ENCODE measurements at regions of chr2 and their contacts with region 1.

Region 1: GRCh38 chr2:207166039-207166348 is 246 bp upstream of the KLF7 start:
- DNase-seq: peak; percentile 95
- ATAC-seq: peak; percentile 95
- H3K4me3 Mint-ChIP-seq: peak overlapping the region; percentile 87
- H3K27ac Mint-ChIP-seq: peak overlapping the region; percentile 96
- H3K4me1 Mint-ChIP-seq: peaks cover 41% of the 10 kb centered on the region
- H3K27me3 Mint-ChIP-seq: no peaks in the 10 kb centered on the region

Region 2: DNA sequence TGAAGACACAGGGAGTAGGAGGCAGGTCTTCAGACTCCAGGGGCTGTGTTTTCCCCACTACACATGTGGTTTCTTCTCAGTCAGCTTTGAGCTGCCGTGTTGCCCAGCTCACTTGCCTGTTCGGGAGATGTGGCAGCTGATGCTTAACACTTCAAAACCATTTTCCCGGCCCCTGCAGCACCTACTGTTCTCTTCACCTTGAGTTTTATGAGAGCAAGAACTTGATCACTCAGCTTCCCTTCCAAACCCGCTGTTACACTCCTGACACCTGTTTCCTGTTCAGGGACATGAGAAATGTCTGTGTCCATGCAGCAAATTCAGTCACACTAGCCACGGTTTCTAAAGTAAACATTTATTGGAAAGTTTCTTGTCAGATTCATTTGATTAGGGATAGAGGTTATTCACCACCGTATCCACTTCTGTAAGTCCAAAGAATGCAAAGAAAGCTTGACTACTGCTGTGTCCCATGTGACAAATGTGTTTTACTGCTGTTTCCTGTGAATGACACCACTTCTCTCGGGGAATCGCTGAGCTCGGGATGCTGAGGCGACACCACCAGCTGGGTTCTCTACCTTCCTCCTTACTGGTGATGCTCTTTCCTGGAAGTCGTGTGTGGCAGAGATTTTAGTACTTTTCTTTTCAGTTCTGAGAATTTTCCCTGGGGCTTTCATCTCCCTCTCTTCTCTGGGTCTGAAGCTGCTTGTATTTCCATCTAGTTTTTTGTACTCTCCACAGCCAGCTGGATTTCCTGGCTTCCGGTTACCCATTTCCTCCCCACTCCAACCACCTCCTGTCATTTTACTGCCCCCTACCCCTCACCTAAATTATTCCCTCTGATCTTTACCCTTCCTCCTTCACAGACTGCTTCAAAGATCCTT is 92.0 kb before region 1 on chr2:
- POLR2A ChIA-PET with region 1: interaction called, 20 read pairs
- DNase-seq: peak; percentile 41
- ATAC-seq: peak; percentile 93
- H3K4me3 Mint-ChIP-seq: peak overlapping the region; percentile 79
- H3K27ac Mint-ChIP-seq: peak overlapping the region; percentile 87
- H3K4me1 Mint-ChIP-seq: peaks cover 33% of the 10 kb centered on the region
- H3K27me3 Mint-ChIP-seq: no peaks in the 10 kb centered on the region

Region 3: DNA sequence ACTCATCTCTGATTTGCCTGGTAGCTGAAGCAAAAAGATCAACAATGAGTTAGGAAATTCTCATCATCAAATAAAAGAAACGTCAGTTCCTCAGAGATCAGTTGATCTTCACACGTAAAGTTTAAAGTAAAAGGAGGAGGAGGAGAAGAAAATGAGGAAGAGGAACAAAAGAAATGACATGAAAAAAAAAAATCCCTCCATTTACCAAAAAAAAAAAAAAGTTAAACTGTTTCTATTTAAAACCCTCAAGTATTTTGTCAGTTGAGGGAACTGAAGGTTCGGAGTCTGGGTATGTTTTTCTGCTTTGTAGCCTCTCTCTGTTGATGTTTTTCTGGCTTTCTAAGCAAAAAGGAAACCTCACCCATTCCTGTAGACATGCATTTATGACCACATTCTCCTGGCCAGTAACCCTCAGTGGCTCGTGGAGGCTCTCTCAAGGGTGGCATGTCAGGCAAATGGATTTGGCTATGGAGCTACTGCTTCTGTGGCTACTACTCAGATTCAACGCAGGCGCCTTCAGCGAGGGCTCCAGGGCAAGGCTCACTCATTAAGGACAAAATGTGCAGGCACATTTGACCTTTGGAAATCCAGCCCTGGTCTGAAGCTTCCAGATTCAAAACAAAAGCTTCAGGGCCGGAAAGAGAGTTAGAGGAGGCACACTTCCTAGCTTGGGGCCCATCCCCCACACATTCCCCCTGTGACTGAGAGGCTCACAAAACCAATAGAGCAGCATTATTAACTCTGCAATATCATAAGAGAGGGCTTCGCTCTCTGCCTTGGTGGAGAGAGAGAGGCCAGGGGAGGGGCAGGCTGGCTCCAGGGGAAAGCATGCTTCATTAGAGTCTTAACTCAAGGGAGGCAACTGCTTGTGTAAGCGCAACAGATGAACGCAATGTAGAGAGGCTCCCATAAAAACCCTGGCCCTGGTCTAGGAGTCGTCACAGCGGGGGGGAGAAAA is 22.5 kb before region 1 on chr2:
- POLR2A ChIA-PET with region 1: interaction called, 107 read pairs
- DNase-seq: peak; percentile 65
- ATAC-seq: peak; percentile 78
- H3K4me3 Mint-ChIP-seq: peak overlapping the region; percentile 72
- H3K27ac Mint-ChIP-seq: peak overlapping the region; percentile 90
- H3K4me1 Mint-ChIP-seq: peaks cover 39% of the 10 kb centered on the region
- H3K27me3 Mint-ChIP-seq: no peaks in the 10 kb centered on the region

Region 4: GRCh38 chr2:207529330-207530159 is 363.6 kb after region 1 on chr2 and contains the start of gene CREB1:
- POLR2A ChIA-PET with region 1: interaction called, 17 read pairs
- DNase-seq: peak; percentile 100
- ATAC-seq: peak; percentile 91
- H3K4me3 Mint-ChIP-seq: peak within 1 kb of the TSS; percentile 100
- H3K27ac Mint-ChIP-seq: peak within 1 kb of the TSS; percentile 100
- H3K4me1 Mint-ChIP-seq: peaks cover 41% of the 10 kb centered on the region
- H3K27me3 Mint-ChIP-seq: peaks cover 3% of the 10 kb centered on the region
- total RNA-seq, gene CREB1: 97.5 to 101 TPM

Measured in activated naive CD8-positive, alpha-beta T cell treated with anti-CD3 and anti-CD28 coated beads, Interleukin-2, amount 10 ng/mL, durations not matched to agents 7 days and 5 days (primary cell).